Motor neuron (in vitro differentiated cells): ENCODE measurements at regions of chr1 and their contacts with region 1.

Region 1: GRCh38 chr1:180482425-180483275 is 19.7 kb downstream of the ACBD6 start:
- ATAC-seq: peak in 4 of 8 experiments; percentile 30 to 60 (median 60)
- H3K4me3 ChIP-seq: no peak overlapping the region
- H3K27ac ChIP-seq: no peak overlapping the region
- H3K4me1 ChIP-seq: peaks cover 3 to 17% of the 10 kb centered on the region in 2 donors

Region 2: GRCh38 chr1:179706339-179706941 is 776.2 kb before region 1 on chr1:
- in situ Hi-C with region 1: loop called in 1 of 9 experiments (anchors 25 kb)
- ATAC-seq: peak in 3 of 8 experiments; percentile 17 to 54 (median 17)
- H3K4me3 ChIP-seq: no peak overlapping the region
- H3K27ac ChIP-seq: no peak overlapping the region
- H3K4me1 ChIP-seq: peaks cover 14 to 32% of the 10 kb centered on the region in 2 donors

Region 3: DNA sequence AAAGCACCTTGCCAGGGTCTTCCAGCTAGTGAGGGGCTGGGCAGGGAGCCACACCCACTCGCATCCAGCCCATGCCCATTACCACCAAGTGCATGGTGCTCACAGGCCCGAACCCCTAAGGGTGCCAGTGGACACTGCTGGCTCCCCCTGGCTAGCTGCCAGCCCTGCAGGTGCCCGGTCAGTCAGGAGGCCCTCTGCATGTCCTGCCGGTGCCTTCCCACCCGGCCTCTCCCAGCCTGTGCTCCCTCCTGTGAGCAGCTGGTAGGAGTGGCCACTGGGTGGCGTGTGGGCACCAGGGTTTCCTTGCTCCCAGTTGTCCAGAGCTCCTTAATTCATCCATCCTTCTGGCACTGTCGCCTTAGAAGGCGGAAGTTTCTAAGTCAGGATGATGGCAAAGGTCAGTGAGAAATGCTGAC is 294.6 kb before region 1 on chr1:
- in situ Hi-C with region 1: loop called in 3 of 9 experiments (anchors 10 kb)
- ATAC-seq: peak; percentile 86 to 99 (median 96)
- H3K4me3 ChIP-seq: no peak overlapping the region
- H3K27ac ChIP-seq: no peak overlapping the region
- H3K4me1 ChIP-seq: peaks cover 3 to 5% of the 10 kb centered on the region in 2 donors

Region 4: GRCh38 chr1:180229152-180229973 is 253.3 kb before region 1 on chr1:
- in situ Hi-C with region 1: loop called in 1 of 9 experiments (anchors 25 kb)
- ATAC-seq: peak; percentile 46 to 71 (median 64)
- H3K4me3 ChIP-seq: peak overlapping the region; percentile 52 to 66 (median 52)
- H3K27ac ChIP-seq: peak overlapping the region; percentile 49 to 78
- H3K4me1 ChIP-seq: peaks cover 17 to 25% of the 10 kb centered on the region in 2 donors

Region 5: DNA sequence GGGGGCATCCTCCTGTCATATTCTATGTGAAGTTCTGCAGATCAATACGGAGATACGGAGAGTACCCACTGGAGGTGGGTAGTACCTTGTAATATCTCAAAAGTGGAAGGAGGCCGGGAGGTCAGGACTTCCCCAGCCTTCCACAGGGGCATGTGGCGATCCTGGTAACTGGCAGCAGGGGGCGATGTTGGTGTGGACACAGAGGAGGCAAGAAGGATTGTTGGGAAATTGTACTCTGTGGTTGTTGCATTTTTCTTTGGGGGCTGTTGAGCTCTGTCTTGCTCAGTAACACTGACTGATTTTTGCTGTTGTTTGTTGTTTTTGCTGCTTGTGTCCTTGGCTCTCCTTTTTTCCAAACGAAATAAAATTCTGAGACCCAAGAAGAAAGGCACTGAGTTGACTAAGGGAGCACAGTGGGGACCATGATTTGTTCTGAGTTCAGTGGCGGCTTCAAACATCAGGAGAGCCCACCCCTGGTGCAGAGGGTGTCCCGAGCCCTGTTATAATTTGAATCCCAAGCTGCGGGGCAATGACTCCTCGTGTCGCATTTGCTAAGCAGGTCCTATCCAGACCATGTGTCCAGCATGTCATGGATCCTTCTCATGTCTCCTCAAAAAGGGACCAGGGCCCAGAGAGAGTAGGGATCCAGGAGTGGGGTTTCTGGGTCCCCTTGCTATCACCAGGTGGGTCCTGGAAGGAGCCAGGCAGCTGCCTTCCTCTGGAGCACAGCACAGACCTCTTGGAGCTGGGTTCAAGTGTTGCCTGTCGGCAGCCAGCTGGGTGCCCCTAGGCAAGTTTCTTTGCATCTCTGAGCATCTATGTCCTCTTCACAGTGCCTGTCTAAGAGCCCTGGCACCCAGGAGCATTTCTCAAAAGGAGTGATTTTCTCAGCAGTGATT is 229.8 kb before region 1 on chr1:
- in situ Hi-C with region 1: loop called in 3 of 9 experiments (anchors 10 to 25 kb)
- ATAC-seq: peak in 3 of 8 experiments; percentile 64 to 79 (median 74)
- H3K4me3 ChIP-seq: no peak overlapping the region
- H3K27ac ChIP-seq: no peak overlapping the region
- H3K4me1 ChIP-seq: peaks cover 48% of the 10 kb centered on the region in 2 donors